ENCODE measurements at regions of chr14 and their contacts with region 1.

Region 1: DNA sequence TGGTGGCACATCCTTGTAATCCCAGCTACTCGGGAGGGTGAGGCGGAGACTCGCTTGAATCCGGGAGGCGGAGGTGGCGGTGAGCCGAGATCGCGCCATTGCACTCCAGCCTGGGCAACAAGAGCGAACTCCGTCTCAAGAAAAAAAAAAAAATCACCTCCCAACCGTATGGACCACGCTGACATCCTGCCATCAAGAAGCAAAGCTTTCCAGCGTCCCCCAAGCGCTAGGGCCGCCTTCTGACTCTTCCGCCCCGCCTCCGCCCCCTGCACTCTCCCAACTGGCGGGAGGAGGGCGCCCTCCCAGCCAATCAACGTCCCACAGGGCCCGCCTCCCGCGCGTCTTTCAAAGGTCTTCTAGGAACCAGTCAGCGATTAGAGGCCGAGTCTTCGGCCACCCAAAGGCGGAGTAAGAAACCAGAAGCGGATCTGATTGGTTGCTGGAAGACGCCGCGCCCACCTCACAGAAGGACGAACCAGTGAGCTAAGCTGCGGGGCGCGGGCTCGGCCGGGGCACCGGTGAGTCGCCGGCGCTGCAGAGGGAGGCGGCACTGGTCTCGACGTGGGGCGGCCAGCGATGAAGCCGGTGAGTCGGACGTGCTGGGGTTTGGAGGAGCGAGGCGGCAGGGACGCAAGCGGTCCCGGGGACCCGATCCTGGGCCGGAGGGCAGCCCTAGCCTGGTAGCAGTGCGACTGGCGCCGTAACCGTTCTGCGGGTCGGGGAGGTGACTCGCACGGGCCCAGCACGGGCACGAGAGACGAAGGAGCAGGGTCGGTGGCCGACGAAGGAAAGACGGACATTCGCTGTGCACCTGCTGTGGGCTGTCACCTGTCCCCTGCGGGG is at the start of gene CDKN3:
- DNase-seq: peak; percentile 98
- H3K4me3 Mint-ChIP-seq: peak within 1 kb of the TSS; percentile 81
- H3K27ac Mint-ChIP-seq: peak within 1 kb of the TSS; percentile 85
- H3K4me1 Mint-ChIP-seq: peaks cover 16% of the 10 kb centered on the region
- H3K27me3 Mint-ChIP-seq: peaks cover 3% of the 10 kb centered on the region
- total RNA-seq, gene CDKN3: 36.5 and 39.2 TPM in 2 replicates

Region 2: DNA sequence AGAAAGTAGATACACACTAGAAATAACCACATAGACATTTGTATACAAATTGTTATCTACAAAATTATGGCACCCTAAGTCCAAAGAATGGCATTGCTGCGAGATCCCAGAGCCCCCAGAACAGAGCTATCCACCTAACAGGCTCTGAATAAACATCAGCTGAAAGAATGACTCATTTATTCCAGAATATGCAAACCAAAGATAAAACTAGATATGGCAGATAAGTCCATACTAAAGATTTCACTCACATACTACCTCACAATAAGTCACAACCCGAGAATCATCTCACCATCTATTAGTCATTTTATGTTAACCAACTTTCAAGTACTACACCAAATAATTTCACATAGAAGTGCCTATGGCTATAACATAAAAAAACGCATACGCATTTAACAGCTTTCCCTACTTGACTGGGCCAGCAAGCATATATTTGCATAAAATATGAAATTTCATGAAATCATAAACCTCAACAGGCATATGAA is 38.8 kb after region 1 on chr14:
- intact Hi-C with region 1: loop called (anchors 1 kb)
- DNase-seq: no peak
- H3K4me3 Mint-ChIP-seq: peak overlapping the region; percentile 74
- H3K27ac Mint-ChIP-seq: peak overlapping the region; percentile 89
- H3K4me1 Mint-ChIP-seq: peaks cover 73% of the 10 kb centered on the region
- H3K27me3 Mint-ChIP-seq: no peaks in the 10 kb centered on the region

Region 3: GRCh38 chr14:54509546-54510501 is 113.1 kb after region 1 on chr14 and contains the start of gene CGRRF1:
- intact Hi-C with region 1: loop called (anchors 1 kb)
- DNase-seq: peak; percentile 94
- H3K4me3 Mint-ChIP-seq: peak within 1 kb of the TSS; percentile 95
- H3K27ac Mint-ChIP-seq: peak within 1 kb of the TSS; percentile 83
- H3K4me1 Mint-ChIP-seq: peaks cover 40% of the 10 kb centered on the region
- H3K27me3 Mint-ChIP-seq: peaks cover 8% of the 10 kb centered on the region
- total RNA-seq, gene CGRRF1: 8.5 and 13.2 TPM in 2 replicates